RWPE1 (cell line): ENCODE measurements at regions of chr9 and their contacts with region 1.

Region 1: GRCh38 chr9:77544546-77544945 is 103.6 kb downstream of the GNA14 start:
- DNase-seq: no peak
- H3K27ac ChIP-seq: no peak overlapping the region
- CTCF ChIP-seq: no peak

Region 2: GRCh38 chr9:77569173-77569734 is 24.7 kb after region 1 on chr9:
- CTCF ChIA-PET with region 1: no interaction called
- POLR2A ChIA-PET with region 1: no interaction called
- DNase-seq: no peak
- H3K27ac ChIP-seq: no peak overlapping the region
- CTCF ChIP-seq: no peak

Region 3: GRCh38 chr9:77751341-77752091 is 207.0 kb after region 1 on chr9:
- CTCF ChIA-PET with region 1: no interaction called
- POLR2A ChIA-PET with region 1: interaction called, 12 read pairs
- DNase-seq: peak; percentile 25
- H3K27ac ChIP-seq: no peak overlapping the region
- CTCF ChIP-seq: peak; percentile 47; the same call in 1 of the 2 replicates